CD4-positive, alpha-beta memory T cell (primary cell): ENCODE measurements at regions of chr1 and their contacts with region 1.

Region 1: GRCh38 chr1:153977250-153978240 is at the start of gene JTB:
- DNase-seq: peak; percentile 77 to 91 (median 79)
- H3K4me3 ChIP-seq: peak within 1 kb of the TSS; percentile 94
- H3K4me3 Mint-ChIP-seq: peak within 1 kb of the TSS; percentile 93 to 98 (median 97)
- H3K27ac ChIP-seq: peak within 1 kb of the TSS; percentile 92
- H3K27ac Mint-ChIP-seq: peak within 1 kb of the TSS; percentile 96 to 98 (median 97)
- H3K4me1 ChIP-seq: peaks cover 25% of the 10 kb centered on the region
- H3K4me1 Mint-ChIP-seq: peaks cover 15 to 54% (median 29%) of the 10 kb centered on the region in 4 donors
- H3K27me3 ChIP-seq: no peaks in the 10 kb centered on the region
- H3K27me3 Mint-ChIP-seq: no peaks in the 10 kb centered on the region
- total RNA-seq, gene JTB: 121 to 130 TPM

Region 2: GRCh38 chr1:153775458-153776327 is 201.9 kb before region 1 on chr1:
- CTCF ChIA-PET with region 1: no interaction called
- POLR2A ChIA-PET with region 1: interaction called, 11 read pairs
- intact Hi-C with region 1: no loop called
- DNase-seq: peak; percentile 53 to 69 (median 57)
- H3K4me3 ChIP-seq: peak overlapping the region; percentile 47 to 71
- H3K4me3 Mint-ChIP-seq: peak overlapping the region; percentile 81 to 88 (median 84)
- H3K27ac ChIP-seq: peak overlapping the region; percentile 47
- H3K27ac Mint-ChIP-seq: peak overlapping the region; percentile 22 to 90 (median 68)
- H3K4me1 ChIP-seq: peaks cover 20% of the 10 kb centered on the region
- H3K4me1 Mint-ChIP-seq: peaks cover 12 to 31% (median 15%) of the 10 kb centered on the region in 4 donors
- H3K27me3 ChIP-seq: no peaks in the 10 kb centered on the region
- H3K27me3 Mint-ChIP-seq: no peaks in the 10 kb centered on the region

Region 3: DNA sequence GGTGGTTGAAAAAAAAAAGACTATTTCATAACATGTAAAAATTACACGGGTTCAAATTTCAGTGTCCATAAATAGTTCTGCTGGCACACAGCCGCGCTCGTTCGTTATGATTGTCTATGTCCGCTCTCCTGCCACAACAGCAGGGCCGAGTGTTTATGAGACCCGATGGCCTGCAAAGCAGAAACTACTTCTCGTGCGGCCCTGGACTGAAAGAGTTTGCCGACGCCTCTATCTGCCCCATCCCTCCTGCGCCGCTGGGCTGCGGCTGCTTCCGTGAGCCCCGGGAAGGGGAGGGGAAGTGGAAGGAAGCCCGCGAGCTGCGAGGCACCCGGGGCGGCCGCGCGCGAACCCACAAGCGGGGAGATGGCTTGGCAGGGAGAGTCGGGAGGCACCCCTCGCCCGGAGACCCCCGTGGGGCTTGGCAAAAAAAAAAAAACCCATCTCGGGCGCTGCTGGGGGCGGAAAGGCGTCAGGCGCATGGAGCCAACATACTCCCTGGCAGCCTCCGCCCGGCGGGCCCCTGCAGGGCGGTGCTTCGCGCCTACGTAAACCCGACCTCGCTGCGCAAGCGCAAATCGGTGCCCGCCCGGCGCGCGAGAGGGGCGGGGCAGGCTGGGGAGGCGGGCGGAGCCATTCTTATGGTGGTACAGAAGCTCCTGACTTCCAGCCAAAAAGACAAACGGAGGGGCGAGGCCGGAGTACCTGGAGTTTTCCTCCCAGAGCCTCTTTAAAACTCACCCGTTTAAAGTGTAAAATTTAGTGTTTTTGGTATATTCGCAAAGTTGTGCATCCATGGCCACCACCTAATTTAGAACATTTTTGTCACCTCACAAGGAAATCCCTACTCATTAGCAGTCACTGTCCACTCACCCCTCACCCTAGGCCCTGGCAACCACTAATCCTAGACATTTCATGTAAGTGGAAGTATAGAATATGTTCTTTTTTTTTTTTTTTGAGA is 194.0 kb before region 1 on chr1:
- CTCF ChIA-PET with region 1: no interaction called
- POLR2A ChIA-PET with region 1: interaction called, 7 read pairs
- intact Hi-C with region 1: loop called (anchors 1 kb)
- DNase-seq: peak; percentile 89 to 94 (median 92)
- H3K4me3 ChIP-seq: peak overlapping the region; percentile 55 to 73
- H3K4me3 Mint-ChIP-seq: peak overlapping the region; percentile 88 to 97 (median 92)
- H3K27ac ChIP-seq: peak overlapping the region; percentile 84
- H3K27ac Mint-ChIP-seq: peak overlapping the region; percentile 89 to 99 (median 98)
- H3K4me1 ChIP-seq: peaks cover 6% of the 10 kb centered on the region
- H3K4me1 Mint-ChIP-seq: peaks cover 4 to 12% (median 11%) of the 10 kb centered on the region in 4 donors
- H3K27me3 ChIP-seq: no peaks in the 10 kb centered on the region
- H3K27me3 Mint-ChIP-seq: peaks cover 0 to 2% of the 10 kb centered on the region in 2 donors

Region 4: DNA sequence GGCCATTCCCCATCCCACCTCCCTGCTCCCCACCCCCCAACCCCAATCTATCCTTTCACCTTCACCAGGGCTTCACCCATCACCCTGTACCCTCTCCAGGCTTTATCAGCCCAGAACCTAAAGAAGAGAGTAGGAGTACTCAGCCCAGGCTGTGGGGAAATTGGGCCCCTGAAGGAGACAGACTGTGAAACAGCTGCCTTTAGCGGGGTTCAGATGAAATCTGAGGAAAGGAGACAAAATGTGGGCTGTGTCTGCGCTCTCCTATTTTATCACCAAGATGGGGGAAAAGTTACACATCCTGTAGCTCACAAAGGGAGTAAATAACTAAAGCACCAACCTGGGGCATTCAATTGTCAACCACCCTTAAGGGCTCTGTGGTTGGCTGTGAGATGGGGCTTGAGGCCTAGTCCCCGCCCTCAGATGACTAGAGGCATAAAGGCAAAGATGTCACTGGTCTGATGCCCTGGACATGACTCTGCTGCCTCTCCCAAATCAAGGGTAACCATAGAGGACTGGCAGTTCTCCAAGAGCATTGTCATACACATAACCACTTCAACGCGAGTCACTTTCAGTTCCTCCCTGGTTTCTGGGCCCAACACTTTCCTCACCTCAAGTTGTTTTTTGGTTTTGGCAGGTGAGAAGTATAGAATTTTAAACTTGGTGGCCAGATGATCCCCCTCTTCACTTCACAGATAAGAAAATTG is 172.4 kb before region 1 on chr1:
- CTCF ChIA-PET with region 1: interaction called, 169 read pairs
- POLR2A ChIA-PET with region 1: interaction called, 12 read pairs
- intact Hi-C with region 1: no loop called
- DNase-seq: peak; percentile 85 to 95 (median 87)
- H3K4me3 ChIP-seq: no peak overlapping the region
- H3K4me3 Mint-ChIP-seq: peak overlapping the region in 7 of 8 donors; percentile 7 to 69 (median 38)
- H3K27ac ChIP-seq: peak overlapping the region; percentile 52
- H3K27ac Mint-ChIP-seq: peak overlapping the region; percentile 87 to 96 (median 90)
- H3K4me1 ChIP-seq: peaks cover 22% of the 10 kb centered on the region
- H3K4me1 Mint-ChIP-seq: peaks cover 21 to 43% (median 29%) of the 10 kb centered on the region in 4 donors
- H3K27me3 ChIP-seq: no peaks in the 10 kb centered on the region
- H3K27me3 Mint-ChIP-seq: no peaks in the 10 kb centered on the region

Region 5: DNA sequence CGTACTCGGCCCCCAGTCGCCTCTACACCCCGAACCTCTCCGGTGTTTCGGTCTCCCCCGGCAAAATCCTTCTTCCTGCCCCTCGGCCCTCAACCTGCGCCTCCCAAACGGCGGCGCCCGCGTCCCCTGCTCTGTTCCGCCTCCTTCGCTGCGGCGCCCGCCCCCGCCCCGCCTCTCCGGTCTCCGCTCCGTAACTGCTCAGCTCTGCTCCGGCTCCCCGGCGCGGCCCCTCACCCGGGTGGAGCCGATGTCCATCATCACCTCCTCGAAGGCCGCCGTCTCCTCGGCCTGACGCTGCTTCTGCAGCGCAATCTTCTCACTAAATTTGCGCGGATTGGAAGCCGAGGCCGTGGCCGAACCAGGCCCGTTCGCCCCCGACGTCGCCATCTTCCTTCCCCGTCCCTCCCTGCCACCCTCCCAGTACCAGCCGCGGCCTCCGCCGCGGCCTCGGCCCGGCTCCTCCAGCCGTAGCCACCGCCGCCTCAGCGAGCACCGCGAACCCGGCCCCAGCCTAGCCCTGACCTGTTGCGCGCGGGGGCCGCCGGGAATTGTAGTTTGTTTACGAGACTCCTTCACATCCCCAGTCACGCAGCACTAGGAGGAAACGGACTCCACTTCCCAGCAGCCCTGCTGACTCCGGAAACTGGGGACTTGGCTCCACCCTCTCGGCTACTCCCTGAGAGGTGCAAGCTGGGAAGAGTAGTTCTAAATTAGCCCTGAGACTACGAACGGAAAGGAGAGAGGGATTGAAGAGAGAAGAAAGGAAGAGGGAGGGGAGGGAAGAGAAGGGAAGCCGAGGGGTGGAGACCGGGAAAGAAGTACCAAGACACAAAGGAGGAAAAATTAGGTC is 19.2 kb before region 1 on chr1 and contains the start of gene CRTC2:
- CTCF ChIA-PET with region 1: interaction called, 55 read pairs
- POLR2A ChIA-PET with region 1: interaction called, 87 read pairs
- intact Hi-C with region 1: loop called (anchors 1 kb)
- DNase-seq: peak; percentile 95 to 99 (median 97)
- H3K4me3 ChIP-seq: peak within 1 kb of the TSS; percentile 80 to 99
- H3K4me3 Mint-ChIP-seq: peak within 1 kb of the TSS; percentile 97 to 99 (median 99)
- H3K27ac ChIP-seq: peak within 1 kb of the TSS; percentile 90
- H3K27ac Mint-ChIP-seq: peak within 1 kb of the TSS; percentile 88 to 99 (median 97)
- H3K4me1 ChIP-seq: peaks cover 61% of the 10 kb centered on the region
- H3K4me1 Mint-ChIP-seq: peaks cover 42 to 75% (median 57%) of the 10 kb centered on the region in 4 donors
- H3K27me3 ChIP-seq: no peaks in the 10 kb centered on the region
- H3K27me3 Mint-ChIP-seq: no peaks in the 10 kb centered on the region
- total RNA-seq, gene CRTC2: 112 to 113 TPM

Region 6: GRCh38 chr1:153967082-153968000 is 10.2 kb before region 1 on chr1 and contains the start of gene CREB3L4:
- CTCF ChIA-PET with region 1: interaction called, 55 read pairs
- POLR2A ChIA-PET with region 1: interaction called, 148 read pairs
- intact Hi-C with region 1: loop called (anchors 1 kb)
- DNase-seq: peak; percentile 82 to 91 (median 87)
- H3K4me3 ChIP-seq: peak within 1 kb of the TSS; percentile 45 to 66
- H3K4me3 Mint-ChIP-seq: peak within 1 kb of the TSS; percentile 86 to 97 (median 92)
- H3K27ac ChIP-seq: peak within 1 kb of the TSS; percentile 89
- H3K27ac Mint-ChIP-seq: peak within 1 kb of the TSS; percentile 95 to 99 (median 96)
- H3K4me1 ChIP-seq: peaks cover 46% of the 10 kb centered on the region
- H3K4me1 Mint-ChIP-seq: peaks cover 29 to 60% (median 47%) of the 10 kb centered on the region in 4 donors
- H3K27me3 ChIP-seq: no peaks in the 10 kb centered on the region
- H3K27me3 Mint-ChIP-seq: no peaks in the 10 kb centered on the region
- total RNA-seq, gene CREB3L4: 7.4 to 9.8 TPM